ENCODE measurements at regions of chr20 and their contacts with region 1.

Region 1: DNA sequence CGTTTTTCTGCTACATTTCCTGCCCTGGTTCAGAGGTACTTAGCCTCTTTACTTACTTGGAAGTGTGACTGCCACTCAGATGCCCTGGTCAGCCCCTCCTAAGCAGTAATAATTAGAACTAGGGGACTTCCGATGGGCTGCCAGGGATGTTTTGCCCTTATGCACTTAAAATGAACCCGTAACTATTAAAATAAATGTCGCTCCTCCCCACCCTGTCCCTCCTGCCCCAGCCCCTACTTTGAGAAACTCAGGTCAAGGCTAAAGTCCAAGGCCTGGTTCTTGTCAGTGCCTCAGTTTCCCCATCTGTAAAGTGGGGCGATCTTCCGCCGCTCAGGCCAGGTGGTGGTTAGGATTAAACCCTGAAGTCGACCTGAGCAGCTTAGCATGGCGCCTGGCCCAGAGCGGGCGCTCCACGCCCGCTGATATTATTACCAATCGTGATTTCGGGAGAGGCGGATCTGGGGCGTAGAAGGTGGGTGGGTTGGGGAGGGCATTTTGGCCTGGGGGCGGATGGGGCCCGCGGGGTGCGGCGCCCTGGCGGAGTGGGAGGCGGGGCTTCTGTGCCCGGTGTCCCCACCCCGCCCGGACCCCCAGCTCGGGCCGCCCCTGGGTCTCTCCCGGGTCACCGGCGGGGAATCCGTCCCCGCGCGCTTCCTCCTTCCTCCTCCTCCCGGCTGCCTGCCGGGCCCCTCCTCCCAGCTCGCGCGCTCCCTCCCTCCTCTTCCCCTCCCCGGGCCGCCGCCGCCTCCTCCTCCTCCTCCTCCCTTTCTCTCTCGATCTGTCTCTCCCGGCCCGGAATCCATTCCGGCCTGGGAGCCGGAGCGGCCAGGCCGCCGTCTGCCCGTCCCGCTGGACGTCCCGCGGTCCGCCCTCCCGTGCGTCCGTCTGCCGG is at the start of gene SRC:
- DNase-seq: peak; percentile 74
- ATAC-seq: peak; percentile 29
- H3K4me3 ChIP-seq: peak within 1 kb of the TSS; percentile 78 to 89 (median 80)
- H3K27ac ChIP-seq: peak within 1 kb of the TSS; percentile 81
- H3K4me1 ChIP-seq: peaks cover 79% of the 10 kb centered on the region
- H3K27me3 ChIP-seq: peaks cover 0 to 5% of the 10 kb centered on the region in 2 experiments; a peak in 1 of 5 replicates
- CTCF ChIP-seq: no peak
- EP300 ChIP-seq: peak in 1 of 2 experiments; percentile 15; a peak in 1 of 4 replicates
- POLR2A ChIP-seq: peak; percentile 70 to 81
- RAD21 ChIP-seq: peak; percentile 47; the same call in 1 of the 2 replicates
- total RNA-seq, gene SRC: 54.7 and 59.7 TPM in 2 replicates

Region 2: DNA sequence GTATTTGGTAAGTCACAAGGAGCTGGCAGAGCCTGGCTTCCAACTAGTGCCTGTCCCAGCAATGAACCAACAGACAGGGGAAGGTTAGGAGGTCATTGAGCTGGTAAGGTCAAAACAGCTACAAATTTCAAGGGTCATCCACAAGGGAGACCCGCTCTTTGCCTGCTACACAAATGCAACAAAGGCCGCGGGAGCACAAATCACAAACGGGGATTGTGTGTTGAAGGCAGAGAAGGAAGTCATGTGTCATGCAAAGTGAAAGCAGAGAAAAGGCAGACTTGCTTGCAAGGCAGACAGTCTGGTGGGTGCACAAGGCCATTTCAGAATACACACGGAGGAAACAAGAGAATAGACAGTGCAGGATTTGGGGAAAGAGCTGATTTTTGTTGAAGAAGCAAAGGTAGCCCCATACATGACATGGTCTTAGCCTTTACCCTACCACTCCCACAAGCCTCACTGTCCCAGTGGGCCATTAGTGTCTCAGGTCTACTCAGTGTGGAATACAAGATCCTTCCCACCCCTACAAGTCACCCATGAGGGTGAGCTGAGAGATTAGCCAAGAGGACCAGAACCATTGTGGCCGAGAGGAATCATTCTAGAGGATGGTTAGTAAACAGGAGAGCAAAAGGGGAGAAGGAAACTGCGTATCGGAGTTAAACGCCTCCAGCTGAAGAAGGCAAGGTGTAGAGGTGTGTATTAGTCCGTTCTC is 376.0 kb before region 1 on chr20:
- CTCF ChIA-PET with region 1: no interaction called
- POLR2A ChIA-PET with region 1: no interaction called
- in situ Hi-C with region 1: no loop called
- intact Hi-C with region 1: no loop called
- DNase-seq: peak; percentile 53
- ATAC-seq: peak; percentile 65
- H3K4me3 ChIP-seq: peak overlapping the region; percentile 28 to 50 (median 37); a peak in 5 of 6 replicates
- H3K27ac ChIP-seq: no peak overlapping the region
- H3K4me1 ChIP-seq: peaks cover 29% of the 10 kb centered on the region
- H3K27me3 ChIP-seq: no peaks in the 10 kb centered on the region
- CTCF ChIP-seq: no peak
- EP300 ChIP-seq: no peak
- POLR2A ChIP-seq: no peak
- RAD21 ChIP-seq: no peak

Region 3: DNA sequence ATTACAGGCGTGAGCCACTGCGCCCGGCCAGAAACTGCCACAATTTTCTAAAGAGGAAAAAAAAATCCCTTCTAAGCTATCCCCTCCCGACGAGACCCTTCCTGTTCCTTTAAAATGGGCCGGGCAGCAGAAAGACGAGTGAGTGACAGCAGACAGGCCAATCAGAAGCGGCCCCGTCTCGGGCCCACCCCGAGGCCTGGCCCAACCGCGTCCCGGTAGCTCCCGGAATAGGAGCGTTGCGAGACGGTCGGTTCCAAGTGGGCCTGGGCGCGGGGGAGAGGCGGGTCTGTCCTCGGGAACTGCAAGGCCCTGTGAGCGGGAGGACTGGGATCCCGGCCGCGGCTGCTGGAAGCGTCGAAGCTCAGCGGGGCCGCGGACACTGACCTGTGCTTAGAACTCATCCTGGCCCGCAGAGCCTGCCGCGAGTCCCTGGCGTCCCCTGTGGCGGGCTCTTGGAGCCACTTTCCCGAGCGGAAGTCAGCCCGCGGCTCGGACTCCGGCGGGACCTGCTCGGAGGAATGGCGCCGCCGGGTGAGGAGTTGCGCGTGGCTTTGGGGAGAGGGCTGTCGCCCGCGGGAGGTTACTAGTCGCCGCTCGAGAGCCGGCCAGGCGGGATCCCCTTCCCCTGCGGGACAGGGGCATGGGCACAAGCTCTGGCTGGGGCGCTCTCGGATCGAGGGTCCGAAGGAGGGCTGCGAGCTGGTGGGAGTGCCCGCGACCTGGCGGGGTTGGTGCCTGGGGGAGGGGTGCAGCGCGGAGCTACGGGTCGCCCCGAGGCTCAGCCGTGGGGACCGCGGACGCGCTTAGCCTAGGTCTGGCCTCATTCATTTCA is 166.5 kb before region 1 on chr20 and contains the starts of genes MROH8 and RPN2:
- CTCF ChIA-PET with region 1: no interaction called
- POLR2A ChIA-PET with region 1: interaction called, 12 read pairs
- in situ Hi-C with region 1: no loop called
- intact Hi-C with region 1: no loop called
- DNase-seq: peak; percentile 98
- ATAC-seq: peak; percentile 98
- H3K4me3 ChIP-seq: peak within 1 kb of the TSS; percentile 77 to 94 (median 89)
- H3K27ac ChIP-seq: peak within 1 kb of the TSS; percentile 95
- H3K4me1 ChIP-seq: peaks cover 48% of the 10 kb centered on the region
- H3K27me3 ChIP-seq: no peaks in the 10 kb centered on the region; a peak in 1 of 5 replicates
- CTCF ChIP-seq: 0 out of 2 replicates have a peak, but pooled peaks have one; percentile 13
- EP300 ChIP-seq: peak in 1 of 2 experiments; percentile 6; a peak in 1 of 4 replicates
- POLR2A ChIP-seq: peak; percentile 77 to 79
- RAD21 ChIP-seq: peak; percentile 76
- total RNA-seq, gene MROH8: 5.5 and 6.1 TPM in 2 replicates
- total RNA-seq, gene RPN2: 284 and 587 TPM in 2 replicates

Region 4: DNA sequence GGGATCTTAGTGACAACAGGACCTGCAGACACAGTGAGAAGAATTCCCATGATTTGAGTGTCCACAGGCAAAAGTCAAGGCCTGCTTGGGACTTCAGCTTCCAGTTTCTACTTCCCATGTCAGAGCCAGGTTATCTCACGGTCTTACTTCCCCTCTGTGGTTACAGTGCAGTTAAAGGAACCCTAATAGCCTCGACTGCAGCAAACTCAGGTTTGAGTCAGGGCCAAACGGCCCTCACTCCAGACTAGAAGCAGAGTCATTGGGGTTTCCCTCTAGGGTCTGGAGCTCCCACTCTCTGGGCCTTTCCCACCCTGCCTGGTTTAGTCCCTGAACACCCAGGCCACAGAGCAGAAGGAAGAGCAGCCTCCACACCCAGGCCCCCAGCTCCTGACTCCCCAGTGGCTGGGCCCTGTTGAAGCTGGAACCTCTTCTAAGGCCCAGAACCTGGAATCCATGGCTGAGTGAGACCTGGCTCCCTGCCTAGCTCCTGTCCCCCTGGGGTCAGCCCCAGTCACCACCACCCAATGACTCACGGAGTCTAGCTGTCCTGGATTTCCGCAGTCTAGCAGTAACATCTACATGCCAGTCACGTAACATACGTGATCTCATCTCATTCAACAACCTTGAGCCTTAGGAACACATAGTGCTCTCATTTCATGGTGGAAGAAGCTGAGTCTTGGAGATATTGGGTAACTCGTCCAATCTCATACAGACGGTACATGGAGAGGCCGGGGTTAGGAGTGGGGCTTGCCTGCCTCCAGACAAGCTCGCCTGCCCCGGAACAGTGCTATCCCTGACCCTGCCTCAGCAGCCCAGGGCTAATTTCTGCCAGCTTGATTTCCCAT is 74.8 kb before region 1 on chr20:
- CTCF ChIA-PET with region 1: no interaction called
- POLR2A ChIA-PET with region 1: interaction called, 16 read pairs
- in situ Hi-C with region 1: no loop called
- intact Hi-C with region 1: loop called (anchors 2 kb)
- DNase-seq: peak; percentile 75
- ATAC-seq: peak; percentile 66
- H3K4me3 ChIP-seq: peak overlapping the region in 2 of 3 experiments; percentile 9 to 43; a peak in 4 of 6 replicates
- H3K27ac ChIP-seq: no peak overlapping the region
- H3K4me1 ChIP-seq: peaks cover 61% of the 10 kb centered on the region
- H3K27me3 ChIP-seq: peaks cover 4 to 14% of the 10 kb centered on the region in 2 experiments; a peak in 4 of 5 replicates
- CTCF ChIP-seq: no peak
- EP300 ChIP-seq: no peak
- POLR2A ChIP-seq: 0 out of 4 replicates have a peak, but pooled peaks of 1 of the 2 experiments have one; percentile 25
- RAD21 ChIP-seq: no peak

Region 5: GRCh38 chr20:37288091-37288490 is 57.5 kb before region 1 on chr20:
- CTCF ChIA-PET with region 1: no interaction called
- POLR2A ChIA-PET with region 1: interaction called, 48 read pairs
- in situ Hi-C with region 1: no loop called
- intact Hi-C with region 1: no loop called
- DNase-seq: no peak
- ATAC-seq: no peak
- H3K4me3 ChIP-seq: no peak overlapping the region
- H3K27ac ChIP-seq: no peak overlapping the region
- H3K4me1 ChIP-seq: peaks cover 73% of the 10 kb centered on the region
- H3K27me3 ChIP-seq: no peaks in the 10 kb centered on the region; a peak in 1 of 5 replicates
- CTCF ChIP-seq: no peak
- EP300 ChIP-seq: no peak
- POLR2A ChIP-seq: no peak
- RAD21 ChIP-seq: no peak

Region 6: DNA sequence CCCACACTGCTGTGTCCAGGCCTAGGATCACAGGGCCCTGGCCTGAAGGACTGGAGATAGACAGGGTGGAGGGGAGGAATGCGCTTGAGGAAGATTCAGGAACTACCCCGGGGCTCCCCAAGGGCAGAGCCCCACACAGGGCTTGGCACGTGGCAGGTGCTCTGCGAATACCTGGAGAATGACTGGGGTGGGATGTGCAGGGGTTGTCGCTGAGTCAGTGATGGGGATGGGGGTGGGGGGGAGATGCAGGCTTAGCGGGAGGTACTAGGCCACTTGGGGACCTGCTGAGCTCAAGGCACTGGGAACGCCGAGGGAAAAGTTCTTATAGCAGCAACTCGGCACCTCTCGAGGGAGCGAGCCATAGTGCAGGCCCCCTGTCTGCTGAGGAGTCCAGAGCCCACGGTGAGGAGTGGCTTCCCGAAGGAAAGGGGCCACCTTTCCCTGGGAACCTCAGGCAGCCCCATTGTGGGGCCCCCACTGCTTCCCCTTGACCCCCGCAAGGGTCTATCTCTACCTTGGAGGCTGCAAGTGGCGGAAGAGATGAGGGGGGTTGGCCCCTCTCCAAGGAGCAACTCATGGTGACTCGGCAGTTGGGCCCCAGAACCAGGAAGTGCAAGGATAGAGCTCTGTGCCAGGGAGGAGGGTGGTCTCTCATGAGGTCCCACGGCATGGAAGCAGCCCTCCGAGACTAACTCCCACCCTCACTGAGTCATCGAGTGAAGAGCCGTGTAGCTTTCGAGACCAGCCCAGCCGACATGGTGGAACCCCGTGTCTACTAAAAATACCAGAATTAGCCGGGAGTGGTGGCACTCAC is 33.4 kb after region 1 on chr20:
- CTCF ChIA-PET with region 1: no interaction called
- POLR2A ChIA-PET with region 1: interaction called, 34 read pairs
- in situ Hi-C with region 1: no loop called
- intact Hi-C with region 1: loop called (anchors 2 kb)
- DNase-seq: no peak
- ATAC-seq: peak; percentile 9; the same call in 2 of the 3 replicates
- H3K4me3 ChIP-seq: no peak overlapping the region
- H3K27ac ChIP-seq: peak overlapping the region; percentile 48
- H3K4me1 ChIP-seq: peaks cover 57% of the 10 kb centered on the region
- H3K27me3 ChIP-seq: no peaks in the 10 kb centered on the region
- CTCF ChIP-seq: no peak
- EP300 ChIP-seq: peak in 1 of 2 experiments; percentile 60; a peak in 2 of 4 replicates
- POLR2A ChIP-seq: no peak
- RAD21 ChIP-seq: no peak

Region 7: GRCh38 chr20:37534401-37535157 is 189.0 kb after region 1 on chr20:
- CTCF ChIA-PET with region 1: no interaction called
- POLR2A ChIA-PET with region 1: no interaction called
- in situ Hi-C with region 1: no loop called
- intact Hi-C with region 1: loop called (anchors 2 kb)
- DNase-seq: peak; percentile 83
- ATAC-seq: peak; percentile 81
- H3K4me3 ChIP-seq: 0 out of 6 replicates have a peak overlapping the region, but pooled peaks of 1 of the 3 experiments have one; percentile 8
- H3K27ac ChIP-seq: no peak overlapping the region
- H3K4me1 ChIP-seq: peaks cover 54% of the 10 kb centered on the region
- H3K27me3 ChIP-seq: no peaks in the 10 kb centered on the region
- CTCF ChIP-seq: peak; percentile 97
- EP300 ChIP-seq: no peak
- POLR2A ChIP-seq: no peak
- RAD21 ChIP-seq: peak; percentile 93